Panc1 (cell line): ENCODE measurements at regions of chr5 and their contacts with region 1.

Region 1: DNA sequence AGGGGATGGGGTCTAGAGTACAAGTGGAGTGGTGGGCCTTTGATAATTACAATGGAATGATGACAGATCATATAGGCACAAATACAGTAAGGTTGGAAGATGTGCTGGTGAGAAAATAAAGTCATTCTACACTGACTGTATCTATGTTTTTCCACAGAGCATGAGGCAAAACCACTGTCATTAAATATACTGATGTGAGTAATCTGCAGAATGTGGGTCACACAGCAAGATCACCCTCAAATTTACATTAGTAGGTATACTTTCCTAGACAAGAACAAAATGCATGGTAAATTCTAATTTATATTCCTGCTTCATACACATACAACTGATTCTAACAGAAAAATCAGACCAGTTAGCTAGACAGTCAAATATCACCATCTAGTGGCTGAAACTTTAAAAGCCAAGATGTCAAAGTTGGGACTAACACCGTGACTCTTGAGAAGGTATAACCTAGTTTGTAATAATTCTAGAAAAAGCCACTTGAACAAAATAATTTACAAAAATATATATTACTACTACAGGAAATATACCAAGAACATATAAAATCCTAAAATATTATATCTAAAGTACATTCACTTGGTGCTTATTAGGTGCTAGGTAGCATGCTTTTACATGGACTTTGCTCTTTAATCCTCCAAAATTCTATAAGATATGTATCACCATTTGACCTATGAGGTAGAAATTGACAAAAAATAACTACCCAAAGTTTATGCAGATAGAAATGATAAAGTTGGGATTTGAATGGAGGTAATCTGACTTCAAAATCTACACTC is 19.5 kb downstream of the TTC33 start:
- DNase-seq: peak; percentile 80
- ATAC-seq: peak; percentile 84
- H3K4me3 ChIP-seq: no peak overlapping the region
- H3K27ac ChIP-seq: no peak overlapping the region
- H3K4me1 ChIP-seq: no peaks in the 10 kb centered on the region
- H3K27me3 ChIP-seq: no peaks in the 10 kb centered on the region
- CTCF ChIP-seq: peak; percentile 78; the same call in 1 of the 2 replicates

Region 2: DNA sequence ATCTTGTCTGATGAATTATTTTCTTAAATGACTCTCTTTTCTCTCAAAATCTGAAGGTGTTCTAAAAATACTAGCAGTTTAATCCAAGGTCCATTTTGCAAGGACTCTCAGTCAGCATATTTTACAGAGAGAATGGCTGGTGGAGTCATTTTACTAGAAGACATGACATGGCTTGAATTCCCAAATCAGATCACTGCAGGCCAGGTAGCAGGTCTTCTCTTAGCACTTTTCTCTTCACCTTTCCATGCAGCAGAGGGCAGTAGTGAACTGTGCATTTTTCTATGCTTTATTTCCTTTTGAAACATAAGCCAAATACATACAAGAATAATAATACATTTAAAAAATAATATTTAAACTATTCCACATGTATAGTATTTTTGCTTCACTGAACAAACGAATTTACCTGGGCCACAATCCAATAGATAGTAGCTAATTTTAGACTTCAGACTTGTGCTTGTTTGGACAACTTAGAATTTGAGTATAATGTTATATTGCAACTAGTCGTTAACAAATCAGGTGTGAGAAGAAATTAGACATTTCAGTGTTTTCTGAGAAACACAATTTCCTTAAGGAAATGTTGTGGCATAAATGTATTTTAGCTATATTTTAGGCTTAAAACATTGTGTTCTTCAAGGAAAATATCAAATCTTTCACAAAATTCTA is 1022.1 kb before region 1 on chr5:
- CTCF ChIA-PET with region 1: no interaction called
- POLR2A ChIA-PET with region 1: no interaction called
- in situ Hi-C with region 1: no loop called
- intact Hi-C with region 1: loop called (anchors 5 kb)
- DNase-seq: peak; percentile 99
- ATAC-seq: peak; percentile 70
- H3K4me3 ChIP-seq: no peak overlapping the region
- H3K27ac ChIP-seq: peak overlapping the region; percentile 65
- H3K4me1 ChIP-seq: peaks cover 16% of the 10 kb centered on the region
- H3K27me3 ChIP-seq: no peaks in the 10 kb centered on the region
- CTCF ChIP-seq: peak; percentile 80

Region 3: DNA sequence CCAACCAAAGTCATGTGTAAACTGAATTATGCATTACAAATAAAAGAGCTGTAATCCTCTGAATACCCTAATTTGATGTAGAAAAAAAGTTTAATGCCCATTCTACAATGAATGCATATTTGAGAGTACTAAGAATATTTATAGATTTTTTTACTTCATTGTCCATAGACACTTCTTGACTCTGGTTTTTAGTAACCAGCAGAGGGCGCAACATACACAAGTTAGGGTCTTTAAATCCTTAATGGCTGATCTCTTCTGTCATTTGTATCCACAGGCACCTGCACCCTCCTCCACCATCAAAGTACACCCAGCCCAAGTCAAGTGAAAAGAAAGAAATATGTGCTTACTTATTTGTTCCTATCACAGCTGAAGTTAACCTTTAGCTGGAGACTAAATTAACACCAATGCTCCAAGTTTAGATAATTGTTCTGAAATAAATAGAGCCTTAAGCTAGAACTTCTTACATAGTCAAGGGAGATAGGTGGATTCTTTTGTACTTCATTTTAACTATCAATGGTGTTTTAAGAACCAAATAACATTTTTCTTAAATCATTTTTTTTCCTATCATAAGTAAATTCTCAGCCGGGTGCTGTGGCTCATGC is 787.3 kb before region 1 on chr5:
- CTCF ChIA-PET with region 1: no interaction called
- POLR2A ChIA-PET with region 1: no interaction called
- in situ Hi-C with region 1: no loop called
- intact Hi-C with region 1: loop called (anchors 5 kb)
- DNase-seq: peak; percentile 73
- ATAC-seq: peak; percentile 94
- H3K4me3 ChIP-seq: no peak overlapping the region
- H3K27ac ChIP-seq: no peak overlapping the region
- H3K4me1 ChIP-seq: no peaks in the 10 kb centered on the region
- H3K27me3 ChIP-seq: no peaks in the 10 kb centered on the region
- CTCF ChIP-seq: peak; percentile 73; the same call in 1 of the 2 replicates